ENCODE measurements at regions of chr2 and their contacts with region 1.

Region 1: DNA sequence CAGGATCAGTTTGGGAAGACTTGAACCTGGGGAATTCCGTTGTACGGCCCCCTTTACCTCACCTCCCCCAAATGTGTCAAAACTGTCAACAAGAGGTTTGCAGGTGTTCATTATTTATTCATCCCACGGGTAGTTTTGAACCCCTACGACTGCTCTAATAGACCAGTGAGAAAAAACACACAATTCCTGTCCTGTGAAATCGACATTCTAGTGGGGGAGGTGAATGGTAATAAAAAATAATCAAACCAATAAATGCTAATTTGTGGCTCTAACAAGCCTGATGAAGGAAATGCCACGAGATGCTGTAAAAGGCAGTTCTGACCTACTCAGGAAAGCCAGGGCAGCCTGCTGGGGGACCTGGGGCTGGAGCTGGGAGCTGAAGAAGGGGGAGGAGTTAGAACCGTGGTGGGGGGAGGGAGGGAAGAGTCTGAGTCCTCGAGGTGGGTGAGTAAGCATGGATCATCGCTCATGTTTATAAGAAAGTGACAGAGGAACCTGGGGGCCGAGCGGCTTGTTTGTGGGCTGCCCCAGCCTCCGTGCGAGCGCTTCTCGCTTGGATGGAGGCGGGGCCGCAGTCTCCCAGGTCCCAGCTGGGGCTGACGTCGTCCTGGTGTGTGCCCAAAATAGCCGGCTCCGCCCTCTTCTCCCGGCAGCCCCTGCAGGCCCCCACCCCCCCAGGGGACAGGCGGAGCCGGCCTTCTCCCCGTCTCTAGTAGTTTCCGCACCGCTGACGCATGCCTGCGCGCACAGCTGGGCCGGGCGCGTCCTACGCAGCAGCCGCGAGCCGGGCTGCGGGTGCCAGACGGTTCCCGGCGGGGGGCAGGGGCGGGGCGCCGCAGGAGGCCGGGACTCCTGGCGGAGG is at the start of gene DNAJB2:
- DNase-seq: peak; percentile 90 to 98
- H3K4me3 ChIP-seq: peak within 1 kb of the TSS; percentile 81
- H3K27ac ChIP-seq: peak within 1 kb of the TSS; percentile 51
- H3K4me1 ChIP-seq: peaks cover 42% of the 10 kb centered on the region
- H3K27me3 ChIP-seq: no peaks in the 10 kb centered on the region
- CTCF ChIP-seq: no peak
- total RNA-seq, gene DNAJB2: 38.5 and 47.5 TPM in 2 replicates

Region 2: GRCh38 chr2:218892693-218893348 is 386.1 kb before region 1 on chr2:
- CTCF ChIA-PET with region 1: no interaction called
- POLR2A ChIA-PET with region 1: no interaction called
- intact Hi-C with region 1: loop called (anchors 10 kb)
- DNase-seq: peak in 1 of 2 experiments; percentile 74
- H3K4me3 ChIP-seq: peak overlapping the region; percentile 53
- H3K27ac ChIP-seq: no peak overlapping the region
- H3K4me1 ChIP-seq: peaks cover 49% of the 10 kb centered on the region
- H3K27me3 ChIP-seq: no peaks in the 10 kb centered on the region
- CTCF ChIP-seq: peak; percentile 22; the same call in 1 of the 2 replicates

Region 3: DNA sequence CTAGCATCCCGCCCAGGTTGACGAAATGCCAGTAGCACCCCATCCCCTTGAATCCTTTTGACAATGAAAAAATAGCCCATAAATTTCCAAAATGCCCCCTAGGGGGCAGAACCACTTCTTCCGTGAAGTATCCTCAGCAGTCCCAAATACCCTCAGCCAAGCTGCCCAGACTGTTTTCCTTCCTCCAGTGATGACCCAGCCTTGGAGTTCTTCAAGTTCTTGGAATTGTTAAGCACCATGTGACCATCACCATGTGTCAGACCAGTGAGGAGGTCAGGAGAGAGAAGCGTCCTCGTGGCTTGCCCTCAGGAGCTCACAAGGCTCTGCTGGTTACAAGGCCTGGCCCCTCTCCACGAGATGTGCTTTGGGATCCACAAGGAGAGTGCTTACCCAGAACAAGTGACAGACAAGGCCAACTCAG is 107.6 kb before region 1 on chr2:
- CTCF ChIA-PET with region 1: no interaction called
- POLR2A ChIA-PET with region 1: interaction called, 14 read pairs
- intact Hi-C with region 1: no loop called
- DNase-seq: peak in 1 of 2 experiments; percentile 36
- H3K4me3 ChIP-seq: no peak overlapping the region
- H3K27ac ChIP-seq: no peak overlapping the region
- H3K4me1 ChIP-seq: peaks cover 11% of the 10 kb centered on the region
- H3K27me3 ChIP-seq: no peaks in the 10 kb centered on the region
- CTCF ChIP-seq: peak; percentile 82

Region 4: DNA sequence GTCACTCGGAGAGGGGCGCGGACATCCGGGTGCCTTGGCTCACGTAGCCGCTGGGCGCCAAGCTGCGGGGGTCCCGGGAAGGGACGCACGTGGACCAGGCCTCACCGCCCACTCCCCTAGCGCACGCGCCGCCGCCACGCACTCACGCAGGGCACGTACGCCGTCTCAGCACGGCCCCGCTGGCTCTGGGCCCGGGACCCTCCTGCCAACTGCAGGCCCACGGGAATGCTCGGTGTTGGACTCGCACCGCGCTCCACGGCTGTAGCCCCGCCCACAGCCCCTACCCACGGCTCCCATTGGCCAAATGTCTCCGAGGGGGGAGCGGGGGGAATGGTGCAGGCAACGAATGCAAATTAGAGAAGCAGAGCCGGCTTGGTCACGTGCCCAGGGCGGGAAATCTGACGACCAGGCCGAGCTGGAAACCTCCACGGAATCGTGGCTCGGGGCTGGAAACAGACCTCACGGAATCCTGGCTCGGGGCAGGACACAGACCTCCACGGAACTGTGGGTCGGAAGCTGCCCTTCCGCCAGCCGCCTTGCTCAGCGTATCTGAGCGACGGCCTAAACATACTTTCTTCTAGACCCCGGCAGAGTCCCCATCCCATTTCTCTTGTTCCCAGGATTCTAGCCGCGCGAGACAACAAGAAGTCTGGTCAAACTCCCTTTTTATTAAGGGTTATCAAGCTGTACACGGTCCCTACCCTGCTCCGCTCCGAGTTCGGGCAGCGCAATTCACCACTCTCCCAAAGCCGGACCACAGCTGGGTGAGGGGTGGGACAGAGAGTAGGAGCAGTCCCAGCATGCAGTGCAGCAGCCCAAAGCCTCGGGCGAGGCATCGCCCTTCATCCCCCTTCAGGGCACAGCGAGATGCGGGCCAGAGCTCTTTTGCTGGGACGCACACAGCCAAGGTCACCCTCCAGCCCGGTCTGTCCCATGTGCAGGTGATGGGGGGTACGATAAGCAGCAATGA is 59.9 kb before region 1 on chr2 and contains the start of gene ABCB6:
- CTCF ChIA-PET with region 1: no interaction called
- POLR2A ChIA-PET with region 1: interaction called, 12 read pairs
- intact Hi-C with region 1: loop called (anchors 1 kb)
- DNase-seq: peak; percentile 67 to 91
- H3K4me3 ChIP-seq: peak within 1 kb of the TSS; percentile 64
- H3K27ac ChIP-seq: peak within 1 kb of the TSS; percentile 90
- H3K4me1 ChIP-seq: peaks cover 13% of the 10 kb centered on the region
- H3K27me3 ChIP-seq: no peaks in the 10 kb centered on the region
- CTCF ChIP-seq: no peak
- total RNA-seq, gene ABCB6: 33.7 and 41.4 TPM in 2 replicates

Region 5: GRCh38 chr2:219229305-219230058 is 49.4 kb before region 1 on chr2 and contains the starts of genes ANKZF1 and ATG9A:
- CTCF ChIA-PET with region 1: no interaction called
- POLR2A ChIA-PET with region 1: interaction called, 19 read pairs
- intact Hi-C with region 1: loop called (anchors 1 kb)
- DNase-seq: peak; percentile 97 to 98
- H3K4me3 ChIP-seq: peak within 1 kb of the TSS; percentile 67
- H3K27ac ChIP-seq: peak within 1 kb of the TSS; percentile 77
- H3K4me1 ChIP-seq: peaks cover 16% of the 10 kb centered on the region
- H3K27me3 ChIP-seq: no peaks in the 10 kb centered on the region
- CTCF ChIP-seq: no peak
- total RNA-seq, gene ANKZF1: 62.2 and 65.1 TPM in 2 replicates
- total RNA-seq, gene ATG9A: 56.0 and 64.5 TPM in 2 replicates

Region 6: GRCh38 chr2:219253753-219254590 is 24.9 kb before region 1 on chr2 and contains the start of gene TUBA4A:
- CTCF ChIA-PET with region 1: interaction called, 6 read pairs
- POLR2A ChIA-PET with region 1: interaction called, 27 read pairs
- intact Hi-C with region 1: loop called (anchors 1 kb)
- DNase-seq: peak; percentile 65 to 87
- H3K4me3 ChIP-seq: peak within 1 kb of the TSS; percentile 87
- H3K27ac ChIP-seq: peak within 1 kb of the TSS; percentile 43
- H3K4me1 ChIP-seq: peaks cover 46% of the 10 kb centered on the region
- H3K27me3 ChIP-seq: no peaks in the 10 kb centered on the region
- CTCF ChIP-seq: no peak
- total RNA-seq, gene TUBA4A: 118 and 157 TPM in 2 replicates

Region 7: DNA sequence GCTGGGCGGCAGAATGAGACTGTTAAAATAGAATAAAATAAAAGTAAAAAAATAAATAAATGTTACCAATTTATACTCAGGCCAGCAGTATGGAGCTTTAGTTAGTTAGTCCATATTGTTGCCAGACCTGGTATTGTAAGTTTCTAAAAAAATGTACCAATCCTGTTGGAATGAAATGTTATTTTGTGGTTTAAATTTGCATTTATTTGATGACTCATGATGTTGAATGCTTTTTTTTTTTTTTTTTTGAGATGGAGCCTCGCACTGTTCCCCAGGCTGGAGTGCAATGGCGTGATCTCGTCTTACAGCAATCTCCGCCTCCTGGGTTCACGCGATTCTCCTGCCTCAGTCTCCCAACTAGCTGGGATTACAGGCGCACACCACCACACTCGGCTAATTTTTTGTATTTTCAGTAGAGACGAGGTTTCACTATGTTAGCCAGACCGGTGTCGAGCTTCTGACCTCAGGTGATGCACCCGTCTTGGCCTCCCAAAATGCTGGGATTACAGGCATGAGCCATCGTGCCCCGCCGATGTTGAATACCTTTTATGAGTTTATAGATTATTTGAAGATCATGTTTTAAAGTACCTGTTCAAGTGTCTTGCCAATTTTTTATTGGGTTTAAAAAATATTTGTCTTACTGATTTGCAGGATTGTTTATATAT is 36.0 kb after region 1 on chr2:
- CTCF ChIA-PET with region 1: interaction called, 12 read pairs
- POLR2A ChIA-PET with region 1: no interaction called
- intact Hi-C with region 1: no loop called
- DNase-seq: no peak
- H3K4me3 ChIP-seq: no peak overlapping the region
- H3K27ac ChIP-seq: no peak overlapping the region
- H3K4me1 ChIP-seq: no peaks in the 10 kb centered on the region
- H3K27me3 ChIP-seq: peaks cover 14% of the 10 kb centered on the region; the same call in 1 of the 2 replicates
- CTCF ChIP-seq: no peak

Region 8: DNA sequence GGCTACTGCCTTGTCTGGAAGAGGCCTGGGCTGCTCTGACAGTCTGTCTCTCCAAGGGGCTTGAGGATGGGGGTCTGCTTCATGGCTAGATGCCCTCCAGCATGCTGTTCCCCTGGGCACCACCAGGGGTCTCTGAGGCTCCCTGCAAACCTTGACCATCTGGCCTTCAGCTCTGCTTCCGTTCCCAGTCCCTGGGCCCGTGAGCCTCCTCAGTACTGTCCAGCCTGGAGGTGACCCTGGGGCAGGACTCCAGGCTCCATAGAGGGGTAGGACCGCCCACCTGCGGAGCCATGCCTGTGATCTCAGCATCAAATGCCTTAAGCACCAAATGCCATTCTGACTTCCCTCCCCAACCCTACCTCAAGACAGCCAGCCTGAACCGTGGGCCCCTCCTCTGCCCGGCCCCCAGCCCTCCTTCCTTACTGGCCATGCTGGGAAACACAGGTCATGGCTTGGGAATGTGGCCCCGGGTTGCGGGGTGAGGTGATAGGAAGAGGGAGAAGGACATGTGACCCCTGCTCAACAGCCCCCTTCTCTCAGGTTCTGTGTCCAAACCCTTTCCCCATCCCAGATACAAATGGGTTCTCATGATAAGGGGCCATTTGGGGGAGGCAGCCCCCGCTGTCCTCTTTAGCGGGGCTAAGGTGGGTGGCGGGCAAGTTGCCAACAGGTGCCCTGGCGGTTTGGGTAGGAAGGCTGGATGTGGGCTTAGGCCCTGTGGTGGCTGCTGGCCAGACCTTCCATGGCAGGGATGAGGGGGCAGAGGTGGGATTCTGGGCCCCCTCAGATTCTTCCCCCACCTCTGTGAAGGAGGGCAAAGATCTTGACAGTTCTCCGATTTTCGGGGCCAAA is 180.8 kb after region 1 on chr2:
- CTCF ChIA-PET with region 1: no interaction called
- POLR2A ChIA-PET with region 1: no interaction called
- intact Hi-C with region 1: no loop called
- DNase-seq: peak in 1 of 2 experiments; percentile 50
- H3K4me3 ChIP-seq: no peak overlapping the region
- H3K27ac ChIP-seq: no peak overlapping the region
- H3K4me1 ChIP-seq: peaks cover 27% of the 10 kb centered on the region
- H3K27me3 ChIP-seq: no peaks in the 10 kb centered on the region
- CTCF ChIP-seq: peak; percentile 91

Region 9: DNA sequence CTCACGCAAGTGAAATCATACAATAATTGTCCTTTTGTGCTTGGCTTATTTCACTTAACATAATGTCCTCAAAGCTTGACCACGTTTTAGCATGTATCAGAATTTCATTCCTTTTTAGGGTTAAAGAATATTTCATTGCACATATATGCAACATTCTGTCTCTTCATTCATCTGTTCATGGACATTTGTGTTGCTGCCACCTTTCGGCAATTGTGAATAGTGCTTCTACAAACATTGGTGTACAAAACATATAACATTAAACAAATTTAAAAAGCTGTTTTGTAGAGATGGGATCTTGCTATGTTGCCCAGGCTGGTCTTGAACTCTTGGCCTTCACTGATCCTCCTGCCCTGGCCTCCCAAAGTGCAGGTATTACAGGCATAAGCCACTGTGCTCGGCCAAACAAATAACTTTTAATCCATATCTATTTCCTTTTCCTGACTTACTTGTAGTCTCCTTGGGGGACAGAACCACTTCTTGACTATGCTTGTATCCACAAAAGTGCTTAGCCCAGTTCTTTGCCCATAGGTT is 557.8 kb after region 1 on chr2:
- CTCF ChIA-PET with region 1: no interaction called
- POLR2A ChIA-PET with region 1: no interaction called
- intact Hi-C with region 1: no loop called
- DNase-seq: peak in 1 of 2 experiments; percentile 3
- H3K4me3 ChIP-seq: no peak overlapping the region
- H3K27ac ChIP-seq: no peak overlapping the region
- H3K4me1 ChIP-seq: no peaks in the 10 kb centered on the region
- H3K27me3 ChIP-seq: no peaks in the 10 kb centered on the region
- CTCF ChIP-seq: peak; percentile 74

Measured in PC-9 (cell line).